WTC11 (cell line): ENCODE measurements at regions of chr16 and their contacts with region 1.

Region 1: GRCh38 chr16:28069971-28070794 is 6.7 kb upstream of the GSG1L start:
- DNase-seq: no peak
- ATAC-seq: no peak; the same call in 1 of the 2 replicates
- H3K4me3 Mint-ChIP-seq: no peak overlapping the region
- H3K27ac Mint-ChIP-seq: no peak overlapping the region
- H3K4me1 Mint-ChIP-seq: peaks cover 11% of the 10 kb centered on the region; the same call in 1 of the 2 replicates
- H3K27me3 Mint-ChIP-seq: peaks cover 13% of the 10 kb centered on the region
- CTCF ChIP-seq: no peak

Region 2: GRCh38 chr16:27892881-27893280 is 177.3 kb before region 1 on chr16:
- CTCF ChIA-PET with region 1: interaction called, 10 read pairs
- POLR2A ChIA-PET with region 1: no interaction called
- DNase-seq: peak; percentile 44
- ATAC-seq: peak; percentile 89
- H3K4me3 Mint-ChIP-seq: no peak overlapping the region
- H3K27ac Mint-ChIP-seq: no peak overlapping the region
- H3K4me1 Mint-ChIP-seq: peaks cover 6% of the 10 kb centered on the region; the same call in 1 of the 2 replicates
- H3K27me3 Mint-ChIP-seq: peaks cover 4% of the 10 kb centered on the region; the same call in 1 of the 2 replicates
- CTCF ChIP-seq: 0 out of 2 replicates have a peak, but pooled peaks have one; percentile 22

Region 3: GRCh38 chr16:27972500-27972899 is 97.7 kb before region 1 on chr16:
- CTCF ChIA-PET with region 1: interaction called, 56 read pairs
- POLR2A ChIA-PET with region 1: no interaction called
- DNase-seq: peak; percentile 62
- ATAC-seq: peak; percentile 89
- H3K4me3 Mint-ChIP-seq: no peak overlapping the region
- H3K27ac Mint-ChIP-seq: no peak overlapping the region
- H3K4me1 Mint-ChIP-seq: no peaks in the 10 kb centered on the region
- H3K27me3 Mint-ChIP-seq: no peaks in the 10 kb centered on the region
- CTCF ChIP-seq: no peak; the same call in 1 of the 2 replicates

Region 4: DNA sequence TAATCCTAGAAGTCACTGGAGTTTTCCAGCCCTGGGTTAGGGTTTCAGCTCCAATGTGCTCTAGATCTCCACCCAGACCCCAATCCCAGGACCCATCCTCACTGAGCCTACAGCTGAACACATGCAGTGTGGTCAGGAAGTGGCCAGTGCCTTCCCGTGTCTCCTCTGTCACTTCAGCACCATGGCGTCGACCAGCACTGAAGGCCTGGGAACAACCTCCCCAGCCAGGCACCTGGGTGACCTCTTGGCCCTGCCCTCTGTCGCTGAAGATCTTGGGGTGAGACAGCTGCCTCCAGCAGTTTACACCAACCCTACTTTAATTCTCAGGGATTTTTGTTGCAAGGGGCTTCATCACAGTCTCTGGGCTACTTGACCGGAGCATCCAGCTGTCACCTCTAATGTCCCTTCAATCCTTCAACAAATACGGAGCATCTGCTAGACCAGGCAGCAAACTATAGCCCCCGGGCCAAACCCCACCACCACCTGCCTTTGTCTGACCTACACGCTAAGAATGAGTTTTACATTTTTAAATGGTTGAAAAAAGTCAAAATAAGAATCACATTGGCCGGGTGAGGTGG is 11.3 kb after region 1 on chr16:
- CTCF ChIA-PET with region 1: interaction called, 16 read pairs
- POLR2A ChIA-PET with region 1: no interaction called
- DNase-seq: no peak
- ATAC-seq: no peak
- H3K4me3 Mint-ChIP-seq: no peak overlapping the region
- H3K27ac Mint-ChIP-seq: no peak overlapping the region
- H3K4me1 Mint-ChIP-seq: no peaks in the 10 kb centered on the region
- H3K27me3 Mint-ChIP-seq: no peaks in the 10 kb centered on the region
- CTCF ChIP-seq: no peak

Region 5: DNA sequence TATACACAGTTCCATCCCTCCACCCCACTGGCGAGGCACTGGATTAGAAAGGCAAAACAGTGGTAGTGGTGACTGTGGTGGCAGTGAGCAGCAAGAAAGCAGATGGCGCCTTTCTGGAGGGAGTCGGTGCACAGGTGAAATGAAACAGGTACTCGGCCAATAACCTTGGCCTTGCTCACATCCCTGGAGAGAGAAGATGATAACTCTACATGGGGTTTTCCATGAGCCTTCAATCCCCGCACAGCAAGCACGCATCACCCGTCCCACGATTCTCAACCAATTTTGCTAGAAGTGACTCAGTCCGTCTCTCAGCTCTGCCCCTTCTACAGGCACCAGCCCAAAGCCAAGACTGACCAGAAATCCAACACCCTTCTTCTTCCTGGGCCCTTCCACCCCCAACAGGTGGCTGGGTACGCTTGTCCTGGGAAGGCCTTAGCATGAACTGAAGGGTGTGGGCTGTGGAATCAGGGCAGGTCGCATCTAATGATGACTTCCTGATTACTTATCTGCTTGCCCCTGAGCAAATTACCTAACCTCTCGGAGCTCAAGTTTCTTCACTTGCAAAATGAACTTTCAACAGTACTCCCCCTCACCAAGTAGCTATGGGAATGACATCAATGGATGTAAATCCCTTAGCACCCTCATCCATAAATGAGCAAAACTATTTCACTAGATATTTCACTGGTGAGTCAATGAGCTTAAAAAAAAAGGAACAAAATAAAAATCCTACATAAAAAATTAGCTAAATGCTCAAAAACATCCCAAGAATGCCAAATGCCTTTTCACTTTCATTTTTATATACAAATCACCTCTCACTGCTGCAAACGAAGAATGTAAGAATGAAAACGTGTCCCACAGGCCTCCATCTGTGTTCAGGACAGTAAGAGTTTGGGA is 123.6 kb after region 1 on chr16:
- CTCF ChIA-PET with region 1: no interaction called
- POLR2A ChIA-PET with region 1: no interaction called
- DNase-seq: no peak
- ATAC-seq: peak; percentile 44
- H3K4me3 Mint-ChIP-seq: no peak overlapping the region
- H3K27ac Mint-ChIP-seq: peak overlapping the region; percentile 26; the same call in 1 of the 2 replicates
- H3K4me1 Mint-ChIP-seq: peaks cover 47% of the 10 kb centered on the region
- H3K27me3 Mint-ChIP-seq: no peaks in the 10 kb centered on the region; the same call in 1 of the 2 replicates
- CTCF ChIP-seq: no peak